Naive thymus-derived CD4-positive, alpha-beta T cell (primary cell): ENCODE measurements at regions of chr7 and their contacts with region 1.

Region 1: GRCh38 chr7:73451780-73452398 is 18.3 kb downstream of the FZD9 start:
- DNase-seq: peak in 7 of 9 donors; percentile 23 to 66 (median 58)
- ATAC-seq: peak; percentile 94
- H3K4me3 ChIP-seq: no peak overlapping the region
- H3K4me3 Mint-ChIP-seq: no peak overlapping the region
- H3K27ac ChIP-seq: no peak overlapping the region
- H3K27ac Mint-ChIP-seq: peak overlapping the region in 1 of 9 donors; percentile 19
- H3K4me1 ChIP-seq: peaks cover 0 to 3% of the 10 kb centered on the region in 2 donors
- H3K4me1 Mint-ChIP-seq: peaks cover 5 to 29% (median 7%) of the 10 kb centered on the region in 7 donors
- H3K27me3 ChIP-seq: no peaks in the 10 kb centered on the region
- H3K27me3 Mint-ChIP-seq: no peaks in the 10 kb centered on the region

Region 2: GRCh38 chr7:73316521-73316920 is 135.4 kb before region 1 on chr7:
- CTCF ChIA-PET with region 1: no interaction called
- POLR2A ChIA-PET with region 1: no interaction called
- intact Hi-C with region 1: loop called in 1 of 2 experiments (anchors 5 kb)
- DNase-seq: no peak
- ATAC-seq: no peak
- H3K4me3 ChIP-seq: no peak overlapping the region
- H3K4me3 Mint-ChIP-seq: no peak overlapping the region
- H3K27ac ChIP-seq: no peak overlapping the region
- H3K27ac Mint-ChIP-seq: no peak overlapping the region
- H3K4me1 ChIP-seq: no peaks in the 10 kb centered on the region
- H3K4me1 Mint-ChIP-seq: no peaks in the 10 kb centered on the region
- H3K27me3 ChIP-seq: no peaks in the 10 kb centered on the region
- H3K27me3 Mint-ChIP-seq: no peaks in the 10 kb centered on the region

Region 3: GRCh38 chr7:73463966-73464365 is 12.1 kb after region 1 on chr7:
- CTCF ChIA-PET with region 1: interaction called, 10 read pairs
- POLR2A ChIA-PET with region 1: no interaction called
- intact Hi-C with region 1: no loop called
- DNase-seq: no peak
- ATAC-seq: no peak
- H3K4me3 ChIP-seq: no peak overlapping the region
- H3K4me3 Mint-ChIP-seq: no peak overlapping the region
- H3K27ac ChIP-seq: no peak overlapping the region
- H3K27ac Mint-ChIP-seq: peak overlapping the region in 2 of 9 donors; percentile 16 to 47
- H3K4me1 ChIP-seq: no peaks in the 10 kb centered on the region
- H3K4me1 Mint-ChIP-seq: peaks cover 0 to 5% (median 0%) of the 10 kb centered on the region in 7 donors
- H3K27me3 ChIP-seq: no peaks in the 10 kb centered on the region
- H3K27me3 Mint-ChIP-seq: no peaks in the 10 kb centered on the region

Region 4: GRCh38 chr7:73547841-73548240 is 96.0 kb after region 1 on chr7:
- CTCF ChIA-PET with region 1: no interaction called
- POLR2A ChIA-PET with region 1: no interaction called
- intact Hi-C with region 1: no loop called
- DNase-seq: no peak
- ATAC-seq: no peak
- H3K4me3 ChIP-seq: no peak overlapping the region
- H3K4me3 Mint-ChIP-seq: peak overlapping the region in 1 of 10 donors; percentile 25
- H3K27ac ChIP-seq: no peak overlapping the region
- H3K27ac Mint-ChIP-seq: peak overlapping the region in 2 of 9 donors; percentile 34 to 52
- H3K4me1 ChIP-seq: peaks cover 0 to 6% of the 10 kb centered on the region in 2 donors
- H3K4me1 Mint-ChIP-seq: peaks cover 25 to 56% (median 37%) of the 10 kb centered on the region in 7 donors
- H3K27me3 ChIP-seq: no peaks in the 10 kb centered on the region
- H3K27me3 Mint-ChIP-seq: no peaks in the 10 kb centered on the region